ENCODE measurements at regions of chr5 and their contacts with region 1.

Region 1: GRCh38 chr5:178453224-178453623 is 137.0 kb downstream of the COL23A1 start:
- DNase-seq: no peak
- ATAC-seq: no peak
- H3K4me3 ChIP-seq: no peak overlapping the region
- H3K27ac ChIP-seq: no peak overlapping the region
- H3K4me1 ChIP-seq: peaks cover 0 to 11% (median 0%) of the 10 kb centered on the region in 12 donors
- H3K27me3 ChIP-seq: peaks cover 0 to 10% (median 0%) of the 10 kb centered on the region in 9 donors
- CTCF ChIP-seq: no peak
- POLR2A ChIP-seq: no peak

Region 2: GRCh38 chr5:178542455-178542854 is 89.2 kb after region 1 on chr5:
- intact Hi-C with region 1: loop called in 1 of 10 experiments (anchors 10 kb)
- DNase-seq: peak in 3 of 5 donors; percentile 42 to 58 (median 48)
- ATAC-seq: peak; percentile 12 to 38 (median 31)
- H3K4me3 ChIP-seq: no peak overlapping the region
- H3K27ac ChIP-seq: peak overlapping the region; percentile 59 to 97 (median 91)
- H3K4me1 ChIP-seq: peaks cover 0 to 49% (median 26%) of the 10 kb centered on the region in 12 donors
- H3K27me3 ChIP-seq: no peaks in the 10 kb centered on the region
- CTCF ChIP-seq: no peak
- POLR2A ChIP-seq: no peak

Measured in heart left ventricle (tissue), 16 donors.